Breast epithelium (tissue), 4 donors: ENCODE measurements at regions of chr16 and their contacts with region 1.

Region 1: GRCh38 chr16:68774982-68775634 is 38.0 kb downstream of the CDH1 start:
- DNase-seq: no peak
- H3K4me3 ChIP-seq: no peak overlapping the region
- H3K27ac ChIP-seq: no peak overlapping the region
- H3K4me1 ChIP-seq: peaks cover 3 to 19% of the 10 kb centered on the region in 2 donors
- H3K27me3 ChIP-seq: no peaks in the 10 kb centered on the region
- CTCF ChIP-seq: no peak
- POLR2A ChIP-seq: no peak

Region 2: GRCh38 chr16:68764862-68765261 is 10.2 kb before region 1 on chr16:
- intact Hi-C with region 1: loop called (anchors 1 kb)
- DNase-seq: no peak
- H3K4me3 ChIP-seq: no peak overlapping the region
- H3K27ac ChIP-seq: peak overlapping the region; percentile 49 to 92
- H3K4me1 ChIP-seq: peaks cover 0 to 10% of the 10 kb centered on the region in 2 donors
- H3K27me3 ChIP-seq: no peaks in the 10 kb centered on the region
- CTCF ChIP-seq: no peak
- POLR2A ChIP-seq: no peak

Region 3: DNA sequence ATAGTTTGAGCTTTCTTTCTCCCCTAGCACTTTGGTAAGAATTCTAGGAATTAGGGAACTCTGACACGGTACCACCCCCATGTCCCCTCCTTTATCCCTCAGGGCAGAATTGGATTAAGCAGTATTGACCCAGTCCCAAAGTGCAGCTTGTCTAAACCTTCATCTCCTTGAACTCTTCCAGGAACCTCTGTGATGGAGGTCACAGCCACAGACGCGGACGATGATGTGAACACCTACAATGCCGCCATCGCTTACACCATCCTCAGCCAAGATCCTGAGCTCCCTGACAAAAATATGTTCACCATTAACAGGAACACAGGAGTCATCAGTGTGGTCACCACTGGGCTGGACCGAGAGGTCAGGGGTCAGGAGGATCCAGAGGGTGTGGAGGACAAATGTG is 36.4 kb after region 1 on chr16:
- intact Hi-C with region 1: no loop called
- DNase-seq: no peak
- H3K4me3 ChIP-seq: no peak overlapping the region
- H3K27ac ChIP-seq: no peak overlapping the region
- H3K4me1 ChIP-seq: no peaks in the 10 kb centered on the region
- H3K27me3 ChIP-seq: no peaks in the 10 kb centered on the region
- CTCF ChIP-seq: no peak
- POLR2A ChIP-seq: no peak